ENCODE measurements at regions of chr3 and their contacts with region 1.

Region 1: GRCh38 chr3:153768561-153769469 is 352.4 kb upstream of the ARHGEF26 start:
- DNase-seq: peak; percentile 57
- H3K4me3 Mint-ChIP-seq: no peak overlapping the region
- H3K27ac Mint-ChIP-seq: no peak overlapping the region
- H3K4me1 Mint-ChIP-seq: peaks cover 2% of the 10 kb centered on the region
- H3K27me3 Mint-ChIP-seq: peaks cover 13% of the 10 kb centered on the region

Region 2: DNA sequence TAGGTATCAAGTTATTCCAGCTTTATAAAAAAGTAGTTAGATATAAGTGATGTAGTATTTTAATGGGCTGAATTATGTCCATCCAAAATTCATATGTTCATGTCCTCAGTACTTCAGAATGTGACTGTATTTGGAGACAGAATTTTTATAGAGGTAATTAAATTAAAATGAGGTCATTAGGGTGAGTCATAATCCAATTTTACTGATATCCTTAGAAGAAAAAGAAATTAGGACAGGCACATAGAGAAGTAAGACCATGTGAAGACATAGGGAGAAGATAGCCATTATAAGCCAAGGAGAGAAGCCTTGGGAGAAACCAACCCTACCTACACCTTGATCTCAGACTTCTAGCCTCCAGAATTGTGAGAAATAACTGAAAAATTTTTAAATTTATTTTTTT is 576.5 kb before region 1 on chr3:
- CTCF ChIA-PET with region 1: no interaction called
- POLR2A ChIA-PET with region 1: no interaction called
- DNase-seq: no peak
- H3K4me3 Mint-ChIP-seq: no peak overlapping the region
- H3K27ac Mint-ChIP-seq: no peak overlapping the region
- H3K4me1 Mint-ChIP-seq: no peaks in the 10 kb centered on the region
- H3K27me3 Mint-ChIP-seq: no peaks in the 10 kb centered on the region

Region 3: GRCh38 chr3:153602801-153603200 is 166.0 kb before region 1 on chr3:
- CTCF ChIA-PET with region 1: no interaction called
- POLR2A ChIA-PET with region 1: no interaction called
- DNase-seq: no peak
- H3K4me3 Mint-ChIP-seq: no peak overlapping the region
- H3K27ac Mint-ChIP-seq: no peak overlapping the region
- H3K4me1 Mint-ChIP-seq: peaks cover 6% of the 10 kb centered on the region
- H3K27me3 Mint-ChIP-seq: no peaks in the 10 kb centered on the region

Region 4: DNA sequence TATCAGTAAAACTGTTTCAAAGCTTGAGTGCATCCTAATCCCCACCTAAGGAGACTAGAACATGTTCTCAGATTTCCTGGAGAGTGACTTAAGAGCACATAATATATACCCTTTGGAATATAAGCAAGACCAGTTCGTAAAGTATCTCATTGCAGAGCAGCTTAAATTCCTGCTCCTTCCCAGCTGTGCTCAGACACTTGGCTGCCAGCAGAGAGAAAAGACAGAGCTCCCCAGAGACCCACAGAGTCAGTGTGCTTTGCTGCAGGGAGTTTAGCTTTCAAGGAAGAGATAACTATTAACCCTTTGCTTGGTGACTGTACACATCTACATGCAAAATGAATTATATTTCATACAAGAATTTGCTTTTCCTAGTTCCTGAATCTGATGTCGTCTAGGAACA is 14.3 kb after region 1 on chr3:
- CTCF ChIA-PET with region 1: interaction called, 11 read pairs
- POLR2A ChIA-PET with region 1: no interaction called
- DNase-seq: no peak
- H3K4me3 Mint-ChIP-seq: no peak overlapping the region
- H3K27ac Mint-ChIP-seq: no peak overlapping the region
- H3K4me1 Mint-ChIP-seq: no peaks in the 10 kb centered on the region
- H3K27me3 Mint-ChIP-seq: peaks cover 3% of the 10 kb centered on the region